CD8-positive, alpha-beta memory T cell (primary cell): ENCODE measurements at regions of chr11 and their contacts with region 1.

Region 1: DNA sequence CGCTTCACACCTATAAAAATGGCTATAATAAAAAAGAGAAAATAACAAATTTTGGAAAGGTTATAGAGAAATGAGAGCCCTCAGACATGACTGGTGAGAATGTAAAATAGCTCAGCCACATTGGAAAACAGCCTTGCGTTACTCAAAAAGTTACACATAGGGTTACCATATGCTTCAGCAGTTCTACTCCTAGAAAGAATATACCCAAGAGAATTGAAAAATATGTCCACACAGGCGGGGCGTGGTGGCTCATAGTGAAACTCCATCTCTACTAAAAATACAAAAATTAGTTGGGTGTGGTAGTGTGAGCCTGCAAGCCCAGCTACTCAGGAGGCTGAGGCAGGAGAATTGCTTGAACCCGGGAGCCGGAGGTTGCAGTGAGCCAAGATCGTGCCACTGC is 7.6 kb upstream of the JHY start:
- DNase-seq: no peak
- H3K4me3 ChIP-seq: no peak overlapping the region
- H3K4me3 Mint-ChIP-seq: no peak overlapping the region
- H3K27ac ChIP-seq: no peak overlapping the region
- H3K27ac Mint-ChIP-seq: peak overlapping the region in 1 of 8 donors; percentile 57
- H3K4me1 ChIP-seq: no peaks in the 10 kb centered on the region
- H3K4me1 Mint-ChIP-seq: peaks cover 8 to 30% (median 9%) of the 10 kb centered on the region in 3 donors
- H3K27me3 ChIP-seq: no peaks in the 10 kb centered on the region
- H3K27me3 Mint-ChIP-seq: peaks cover 0 to 1% of the 10 kb centered on the region in 2 donors

Region 2: DNA sequence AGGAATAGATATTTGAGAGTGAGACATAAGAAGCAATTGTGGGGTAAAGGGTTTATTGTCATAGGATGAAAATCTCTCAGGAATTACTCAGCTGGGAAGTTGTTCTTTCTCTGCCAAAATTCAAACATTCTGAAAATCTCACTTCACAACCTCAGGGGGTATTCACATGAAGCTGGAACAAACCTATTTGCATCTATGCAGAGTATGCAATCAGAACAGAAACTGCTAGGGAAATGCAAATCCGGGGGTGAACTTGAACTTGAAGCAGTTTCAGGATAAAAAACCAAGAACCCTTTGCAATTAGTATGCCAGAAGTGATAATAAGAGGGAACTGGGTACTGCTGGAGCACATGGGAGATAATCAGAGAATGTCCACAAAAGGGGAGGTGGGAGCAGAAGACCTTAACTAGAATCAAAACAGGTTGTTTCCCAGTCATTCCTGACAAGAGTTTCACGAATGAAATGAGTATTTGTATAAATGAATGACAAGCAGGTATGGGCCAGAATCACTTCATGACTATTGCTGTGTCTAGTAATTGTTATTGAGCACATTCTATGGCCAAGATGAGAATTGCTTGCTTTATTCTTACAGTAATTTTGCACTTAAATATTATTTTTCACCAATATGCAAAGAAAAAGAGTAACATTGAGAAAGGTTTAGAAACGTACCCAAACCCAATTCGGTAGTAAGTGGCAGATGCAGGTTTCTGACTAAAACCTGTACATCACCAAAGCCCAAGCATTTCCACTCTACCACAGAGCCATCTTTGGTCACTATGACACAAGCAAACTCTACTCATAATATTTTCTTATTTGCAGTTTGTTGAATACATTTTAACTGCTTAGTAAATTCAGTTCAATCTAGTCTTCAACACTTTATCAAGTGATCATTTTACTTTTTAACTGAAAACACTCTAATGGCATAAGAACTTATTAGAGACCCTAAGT is 281.2 kb before region 1 on chr11:
- CTCF ChIA-PET with region 1: no interaction called
- POLR2A ChIA-PET with region 1: no interaction called
- DNase-seq: no peak
- H3K4me3 ChIP-seq: no peak overlapping the region
- H3K4me3 Mint-ChIP-seq: no peak overlapping the region
- H3K27ac ChIP-seq: no peak overlapping the region
- H3K27ac Mint-ChIP-seq: no peak overlapping the region
- H3K4me1 ChIP-seq: no peaks in the 10 kb centered on the region
- H3K4me1 Mint-ChIP-seq: no peaks in the 10 kb centered on the region
- H3K27me3 ChIP-seq: peaks cover 6% of the 10 kb centered on the region
- H3K27me3 Mint-ChIP-seq: peaks cover 9 to 42% of the 10 kb centered on the region in 2 donors

Region 3: DNA sequence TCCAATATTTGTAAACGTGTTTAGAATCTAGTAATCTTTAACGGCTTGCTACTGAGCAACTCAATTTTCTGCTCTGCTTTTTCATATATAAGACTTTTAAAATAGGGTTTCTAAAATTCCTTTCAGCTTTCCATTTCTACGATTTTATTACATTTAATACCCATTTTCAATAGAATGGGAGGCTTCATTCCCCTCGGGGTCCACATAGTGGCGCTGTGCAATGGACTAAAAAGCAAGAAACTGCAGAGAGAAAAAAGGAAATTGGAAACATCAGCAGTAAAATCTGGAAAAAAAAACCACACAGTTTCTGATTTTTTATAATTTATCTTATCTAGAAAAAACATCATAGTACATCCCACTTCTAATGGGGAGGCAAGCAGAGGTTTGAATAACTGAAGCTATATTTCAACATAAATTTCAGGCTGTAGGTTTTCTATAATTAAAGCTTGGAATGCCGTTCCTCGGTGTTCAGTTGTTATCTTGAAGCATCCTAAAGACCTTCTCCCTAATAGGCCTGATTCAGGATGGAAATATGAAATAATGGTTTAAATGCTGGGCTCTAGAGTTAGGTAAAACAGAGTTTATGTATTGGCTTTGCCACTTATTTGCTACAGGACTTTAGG is 11.2 kb before region 1 on chr11:
- CTCF ChIA-PET with region 1: interaction called, 15 read pairs
- POLR2A ChIA-PET with region 1: no interaction called
- DNase-seq: peak in 1 of 5 donors; percentile 53
- H3K4me3 ChIP-seq: no peak overlapping the region
- H3K4me3 Mint-ChIP-seq: no peak overlapping the region
- H3K27ac ChIP-seq: no peak overlapping the region
- H3K27ac Mint-ChIP-seq: peak overlapping the region in 1 of 8 donors; percentile 70
- H3K4me1 ChIP-seq: no peaks in the 10 kb centered on the region
- H3K4me1 Mint-ChIP-seq: peaks cover 0 to 10% (median 4%) of the 10 kb centered on the region in 3 donors
- H3K27me3 ChIP-seq: no peaks in the 10 kb centered on the region
- H3K27me3 Mint-ChIP-seq: no peaks in the 10 kb centered on the region

Region 4: DNA sequence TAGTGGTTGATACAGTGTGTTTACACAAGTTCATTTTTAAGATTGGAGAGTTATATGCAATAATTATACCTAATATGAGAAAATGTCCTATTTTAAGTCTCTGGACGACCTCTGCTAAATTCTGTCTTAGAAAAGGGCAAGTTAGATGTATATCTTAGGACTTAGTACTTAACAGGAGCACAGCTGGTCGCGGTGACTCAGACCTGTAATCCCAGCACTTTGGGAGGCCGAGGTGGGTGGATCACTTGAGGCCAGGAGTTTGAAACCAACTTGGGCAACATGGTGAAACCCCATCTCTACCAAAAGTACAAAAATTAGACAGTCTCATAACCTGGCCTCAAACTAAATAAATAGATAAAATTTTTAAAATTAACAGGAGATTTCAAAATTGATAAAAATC is 79.5 kb after region 1 on chr11:
- CTCF ChIA-PET with region 1: no interaction called
- POLR2A ChIA-PET with region 1: no interaction called
- DNase-seq: no peak
- H3K4me3 ChIP-seq: no peak overlapping the region
- H3K4me3 Mint-ChIP-seq: no peak overlapping the region
- H3K27ac ChIP-seq: no peak overlapping the region
- H3K27ac Mint-ChIP-seq: no peak overlapping the region
- H3K4me1 ChIP-seq: no peaks in the 10 kb centered on the region
- H3K4me1 Mint-ChIP-seq: peaks cover 0 to under 1% (median 0%) of the 10 kb centered on the region in 3 donors
- H3K27me3 ChIP-seq: no peaks in the 10 kb centered on the region
- H3K27me3 Mint-ChIP-seq: no peaks in the 10 kb centered on the region